PC-9 (cell line): ENCODE measurements at regions of chr1 and their contacts with region 1.

Region 1: DNA sequence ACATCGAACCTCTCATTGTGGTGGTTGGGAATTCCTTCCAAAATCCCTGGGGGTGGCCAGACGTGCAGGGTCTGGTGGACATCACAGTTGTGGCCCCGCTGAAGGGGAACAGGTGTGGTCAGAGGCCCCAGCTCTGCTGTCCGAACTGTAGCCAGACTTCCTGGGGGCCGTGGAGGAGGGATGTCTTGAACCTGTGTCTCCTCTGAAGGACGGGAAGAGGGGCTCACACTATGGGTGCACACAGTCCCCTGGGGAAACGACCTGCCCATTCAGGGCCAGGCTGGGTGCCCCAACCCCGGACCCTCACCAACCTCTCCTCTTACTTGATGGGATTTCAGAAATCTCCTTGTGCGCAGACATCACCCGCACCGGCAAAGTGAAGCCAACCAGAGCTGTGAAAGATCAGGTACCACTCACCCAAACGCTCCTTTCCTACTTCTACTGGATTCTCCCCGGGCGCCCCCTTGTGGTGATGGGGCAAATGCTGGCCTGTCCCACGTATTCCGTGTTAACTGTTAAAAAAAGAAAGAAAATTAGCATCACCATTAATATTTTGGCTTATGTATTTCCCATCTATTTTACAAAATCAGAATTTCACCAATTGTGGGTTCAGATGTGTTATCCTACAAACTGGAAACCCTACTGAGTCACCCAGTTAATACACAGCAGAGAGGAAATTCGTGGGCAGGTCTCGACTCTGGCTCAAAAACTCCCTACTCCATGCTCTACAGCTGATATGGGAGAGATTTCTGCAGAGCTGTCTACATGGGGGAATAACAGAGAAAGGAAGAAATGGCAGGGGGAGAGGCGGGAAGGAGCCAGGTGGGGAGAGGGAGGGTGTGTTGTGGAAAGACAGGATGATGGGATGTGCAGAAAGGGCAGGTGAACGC is 28.1 kb downstream of the PADI4 start:
- DNase-seq: peak; percentile 55 to 79
- H3K4me3 ChIP-seq: no peak overlapping the region
- H3K27ac ChIP-seq: no peak overlapping the region
- H3K4me1 ChIP-seq: no peaks in the 10 kb centered on the region; the same call in 1 of the 2 replicates
- H3K27me3 ChIP-seq: no peaks in the 10 kb centered on the region
- CTCF ChIP-seq: peak; percentile 86

Region 2: GRCh38 chr1:17059739-17060460 is 276.2 kb before region 1 on chr1:
- CTCF ChIA-PET with region 1: no interaction called
- POLR2A ChIA-PET with region 1: no interaction called
- intact Hi-C with region 1: loop called (anchors 2 kb)
- DNase-seq: peak; percentile 66 to 75
- H3K4me3 ChIP-seq: no peak overlapping the region
- H3K27ac ChIP-seq: no peak overlapping the region
- H3K4me1 ChIP-seq: no peaks in the 10 kb centered on the region
- H3K27me3 ChIP-seq: no peaks in the 10 kb centered on the region
- CTCF ChIP-seq: peak; percentile 75

Region 3: DNA sequence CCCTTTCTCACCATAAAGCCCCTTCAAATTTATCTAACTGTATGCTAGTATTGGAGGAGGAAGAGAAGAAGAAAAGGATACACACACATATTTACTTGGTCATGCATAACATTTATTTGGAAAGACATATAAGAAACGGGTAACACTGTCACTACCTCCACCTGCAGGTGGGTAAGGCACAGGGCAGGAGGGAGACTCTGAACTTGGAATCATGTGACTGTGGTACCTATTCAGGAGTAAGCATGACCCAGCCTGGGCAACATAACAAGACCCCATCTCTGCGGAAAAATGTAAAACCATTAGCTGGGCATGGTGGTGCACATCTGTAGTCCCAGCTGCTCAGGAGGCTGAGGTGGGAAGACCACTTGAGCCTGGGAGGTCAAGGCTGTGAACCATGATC is 34.6 kb after region 1 on chr1:
- CTCF ChIA-PET with region 1: no interaction called
- POLR2A ChIA-PET with region 1: no interaction called
- intact Hi-C with region 1: loop called (anchors 2 kb)
- DNase-seq: peak in 1 of 2 experiments; percentile 45
- H3K4me3 ChIP-seq: no peak overlapping the region
- H3K27ac ChIP-seq: no peak overlapping the region
- H3K4me1 ChIP-seq: peaks cover 32% of the 10 kb centered on the region
- H3K27me3 ChIP-seq: no peaks in the 10 kb centered on the region
- CTCF ChIP-seq: peak; percentile 67

Region 4: GRCh38 chr1:17381161-17381560 is 45.1 kb after region 1 on chr1:
- CTCF ChIA-PET with region 1: interaction called, 12 read pairs
- POLR2A ChIA-PET with region 1: no interaction called
- intact Hi-C with region 1: no loop called
- DNase-seq: no peak
- H3K4me3 ChIP-seq: no peak overlapping the region
- H3K27ac ChIP-seq: no peak overlapping the region
- H3K4me1 ChIP-seq: peaks cover 13% of the 10 kb centered on the region
- H3K27me3 ChIP-seq: no peaks in the 10 kb centered on the region
- CTCF ChIP-seq: no peak

Region 5: GRCh38 chr1:17405898-17406759 is 70.1 kb after region 1 on chr1:
- CTCF ChIA-PET with region 1: interaction called, 5 read pairs
- POLR2A ChIA-PET with region 1: no interaction called
- intact Hi-C with region 1: loop called (anchors 1 kb)
- DNase-seq: peak; percentile 39 to 73
- H3K4me3 ChIP-seq: no peak overlapping the region
- H3K27ac ChIP-seq: no peak overlapping the region
- H3K4me1 ChIP-seq: peaks cover 11% of the 10 kb centered on the region
- H3K27me3 ChIP-seq: no peaks in the 10 kb centered on the region
- CTCF ChIP-seq: peak; percentile 78